ENCODE measurements at regions of chr4 and their contacts with region 1.

Region 1: GRCh38 chr4:24472514-24473308 is 111.6 kb downstream of the DHX15 start:
- DNase-seq: peak; percentile 82 to 86
- H3K4me3 ChIP-seq: peak overlapping the region; percentile 54 to 66
- H3K27ac ChIP-seq: peak overlapping the region; percentile 41 to 46
- H3K4me1 ChIP-seq: peaks cover 0 to 38% (median 30%) of the 10 kb centered on the region in 4 donors
- H3K27me3 ChIP-seq: peaks cover 0 to 13% of the 10 kb centered on the region in 2 donors
- CTCF ChIP-seq: peak; percentile 60 to 65

Region 2: DNA sequence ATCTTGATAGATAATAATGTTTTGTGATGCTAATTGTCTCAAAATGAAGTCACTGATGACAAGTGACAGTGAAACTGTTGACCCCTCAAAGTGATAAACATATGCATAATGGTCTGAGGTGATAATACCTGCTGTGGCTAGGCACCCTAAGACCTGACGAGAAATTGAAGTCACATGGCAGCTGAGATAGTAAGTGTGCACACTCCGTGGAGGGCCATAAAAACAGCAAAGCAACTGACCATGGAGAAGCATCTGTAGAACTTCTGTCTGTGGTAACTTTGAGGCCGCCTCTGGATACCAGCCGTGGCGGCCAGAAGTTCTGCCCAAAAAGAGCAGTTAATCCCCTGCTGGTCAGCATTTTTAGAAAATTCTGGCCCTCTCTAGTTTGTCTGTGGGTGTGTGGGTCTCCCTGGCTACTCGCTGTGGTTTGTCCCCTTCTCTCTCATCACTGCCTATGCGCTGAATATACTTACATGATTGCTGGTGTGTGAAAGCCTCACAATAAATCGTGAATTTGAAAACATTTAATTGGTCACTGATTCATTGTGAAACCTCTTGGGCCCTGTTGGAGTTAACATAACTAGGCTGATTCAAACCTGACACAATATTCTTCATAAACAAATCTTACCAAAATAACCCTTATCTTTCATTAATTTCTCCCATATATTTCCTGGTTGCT is 389.5 kb after region 1 on chr4:
- intact Hi-C with region 1: loop called (anchors 5 kb)
- DNase-seq: no peak
- H3K4me3 ChIP-seq: no peak overlapping the region
- H3K27ac ChIP-seq: no peak overlapping the region
- H3K4me1 ChIP-seq: peaks cover 0 to 19% (median 13%) of the 10 kb centered on the region in 4 donors
- H3K27me3 ChIP-seq: no peaks in the 10 kb centered on the region
- CTCF ChIP-seq: no peak

Measured in tibial artery (tissue), 4 donors.